Sigmoid colon (tissue), 7 donors: ENCODE measurements at regions of chr2 and their contacts with region 1.

Region 1: DNA sequence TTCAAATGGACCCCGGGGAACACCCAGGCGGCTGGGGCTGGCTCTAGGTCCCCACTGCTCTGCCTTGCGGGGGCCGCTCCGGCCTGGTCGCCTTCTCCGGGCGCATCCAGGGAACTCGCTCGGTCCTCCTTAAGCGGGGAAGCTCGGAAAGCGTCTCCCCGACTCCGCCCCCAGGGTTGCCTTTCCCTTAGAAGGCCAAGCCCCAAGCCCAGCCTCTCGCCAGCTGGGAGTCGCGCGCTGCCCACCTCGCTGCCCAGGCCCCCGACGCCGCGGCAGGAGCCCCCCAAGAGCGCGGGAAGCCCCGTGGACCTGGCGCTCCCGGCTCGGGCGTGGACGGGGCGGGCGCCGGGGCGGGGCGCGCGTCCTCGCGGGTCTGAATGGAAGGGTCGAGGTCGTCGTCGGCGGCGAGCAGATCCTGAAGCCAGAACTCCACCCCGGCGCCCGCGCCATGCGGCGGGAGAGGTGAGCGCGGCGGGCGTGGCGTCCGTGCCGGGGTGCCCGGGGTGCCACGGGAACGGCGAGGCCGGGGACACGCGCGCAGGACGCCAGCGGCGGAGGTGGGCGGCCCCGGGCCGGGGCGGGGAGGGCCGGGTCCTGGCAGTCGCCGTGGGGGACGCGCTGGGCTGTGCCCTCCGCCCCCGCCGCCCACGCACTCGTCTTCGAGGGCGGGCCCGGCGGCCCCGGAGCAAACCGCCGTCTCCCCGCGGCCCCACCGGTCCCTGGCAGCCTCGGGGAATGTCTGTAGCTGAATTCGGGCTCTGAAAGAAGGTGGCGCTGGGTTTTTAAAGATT is at the start of gene BOK:
- DNase-seq: peak; percentile 93
- H3K4me3 ChIP-seq: peak within 1 kb of the TSS; percentile 57 to 87 (median 70)
- H3K27ac ChIP-seq: peak within 1 kb of the TSS; percentile 80 to 94 (median 90)
- H3K4me1 ChIP-seq: peaks cover 0 to 52% (median 48%) of the 10 kb centered on the region in 4 donors
- H3K27me3 ChIP-seq: no peaks in the 10 kb centered on the region
- CTCF ChIP-seq: no peak
- EP300 ChIP-seq: no peak
- POLR2A ChIP-seq: no peak
- total RNA-seq, gene BOK: 46.6 to 112 (median 81.0) TPM

Region 2: GRCh38 chr2:241508240-241509154 is 50.2 kb before region 1 on chr2 and contains the start of gene STK25:
- intact Hi-C with region 1: loop called (anchors 1 kb)
- DNase-seq: peak; percentile 99
- H3K4me3 ChIP-seq: peak within 1 kb of the TSS; percentile 65 to 99 (median 76)
- H3K27ac ChIP-seq: peak within 1 kb of the TSS; percentile 82 to 91 (median 90)
- H3K4me1 ChIP-seq: peaks cover 0 to 43% (median 40%) of the 10 kb centered on the region in 4 donors
- H3K27me3 ChIP-seq: no peaks in the 10 kb centered on the region
- CTCF ChIP-seq: peak in 1 of 4 experiments; percentile 2
- EP300 ChIP-seq: peak in 1 of 4 donors; percentile 38
- POLR2A ChIP-seq: peak in 1 of 2 donors; percentile 29
- total RNA-seq, gene STK25: 125 to 266 (median 178) TPM

Region 3: DNA sequence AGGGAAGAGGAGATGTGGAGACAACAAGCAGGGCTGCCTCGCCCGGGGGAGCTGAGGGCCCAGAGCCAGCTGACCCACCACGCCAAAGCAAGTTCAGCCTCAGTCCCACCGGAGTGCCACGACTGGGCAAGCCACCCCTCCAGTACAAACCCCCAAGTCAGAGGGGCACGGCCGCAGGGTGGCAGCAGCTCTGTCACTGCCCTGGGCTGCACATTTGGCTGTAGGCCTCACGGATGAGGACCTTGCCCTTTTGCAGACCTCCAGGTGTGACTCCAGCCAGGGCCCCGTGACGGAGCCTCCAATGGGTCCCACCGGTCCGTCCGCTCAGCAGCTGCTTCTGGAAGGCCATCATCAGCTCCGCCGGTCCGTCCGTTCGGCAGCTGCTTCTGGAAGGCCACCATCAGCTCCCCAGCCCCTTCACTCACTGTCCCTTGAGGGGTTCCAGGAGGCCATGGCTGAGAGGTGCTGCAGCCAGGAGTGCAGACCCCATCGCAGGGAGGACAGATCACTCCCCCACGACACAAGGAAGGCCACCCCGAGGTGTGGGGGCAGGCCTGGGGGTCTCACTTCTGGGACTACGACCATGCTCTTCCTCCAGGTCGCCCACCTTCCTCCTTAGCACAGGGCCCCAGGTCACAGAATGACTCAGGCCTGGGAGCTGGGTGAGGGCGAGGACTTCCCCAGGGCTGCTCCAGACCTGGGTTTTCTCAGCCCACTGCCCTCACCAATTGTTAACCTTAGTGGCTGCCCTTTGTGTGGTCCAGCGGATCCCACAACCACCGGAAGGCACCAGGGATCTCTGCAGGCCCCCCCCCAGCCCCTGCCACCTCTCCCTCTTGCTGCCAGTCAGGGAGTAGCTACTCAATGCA is 25.8 kb before region 1 on chr2:
- intact Hi-C with region 1: no loop called
- DNase-seq: no peak
- H3K4me3 ChIP-seq: no peak overlapping the region
- H3K27ac ChIP-seq: no peak overlapping the region
- H3K4me1 ChIP-seq: no peaks in the 10 kb centered on the region
- H3K27me3 ChIP-seq: peaks cover 0 to 5% (median 0%) of the 10 kb centered on the region in 3 donors
- CTCF ChIP-seq: no peak
- EP300 ChIP-seq: no peak
- POLR2A ChIP-seq: no peak